ENCODE measurements at regions of chr11 and their contacts with region 1.

Region 1: DNA sequence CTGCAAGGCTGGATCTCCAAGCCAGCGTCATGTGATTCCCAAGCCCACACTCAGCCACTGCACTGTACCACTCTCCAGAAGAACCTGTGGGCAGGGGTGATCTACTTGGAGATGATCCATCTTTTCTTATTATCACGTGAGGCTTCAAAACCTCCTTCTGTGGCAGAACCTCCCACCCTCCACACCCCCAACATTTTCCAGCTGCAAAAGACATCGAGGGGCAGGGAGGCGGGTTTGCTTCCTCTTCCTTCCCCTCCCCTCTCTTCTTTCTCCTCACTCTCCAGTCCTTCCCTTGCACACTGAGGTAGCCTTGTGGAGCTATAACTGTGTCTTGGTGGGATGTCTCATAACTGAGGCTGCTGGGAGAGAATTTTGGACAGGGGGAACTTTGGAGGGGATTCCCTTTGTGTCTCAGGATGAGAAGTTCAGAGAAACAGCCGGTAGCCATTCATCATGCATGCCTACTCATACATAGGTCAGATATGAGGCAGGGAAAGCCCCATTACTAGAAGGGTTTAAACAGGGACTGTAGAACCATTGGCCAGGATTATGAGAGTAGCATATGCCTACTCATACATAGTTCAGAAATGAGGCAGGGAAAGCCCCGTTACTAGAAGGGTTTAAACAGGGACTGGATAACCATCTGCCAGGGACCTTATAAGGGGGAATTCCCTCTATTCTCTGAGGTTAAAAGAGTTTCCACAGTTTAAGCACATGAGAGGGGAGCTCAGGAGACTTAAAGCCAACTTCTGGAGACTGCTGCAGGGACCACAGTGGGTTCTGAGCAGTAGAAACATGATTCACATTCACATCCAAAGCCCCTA is 420.7 kb upstream of the CADM1 start:
- DNase-seq: peak; percentile 56
- H3K4me3 Mint-ChIP-seq: no peak overlapping the region
- H3K27ac Mint-ChIP-seq: no peak overlapping the region
- H3K4me1 Mint-ChIP-seq: peaks cover 16% of the 10 kb centered on the region
- H3K27me3 Mint-ChIP-seq: peaks cover 15% of the 10 kb centered on the region

Region 2: GRCh38 chr11:115222218-115222862 is 702.6 kb before region 1 on chr11:
- CTCF ChIA-PET with region 1: no interaction called
- POLR2A ChIA-PET with region 1: no interaction called
- intact Hi-C with region 1: loop called (anchors 1 kb)
- DNase-seq: peak; percentile 63
- H3K4me3 Mint-ChIP-seq: no peak overlapping the region
- H3K27ac Mint-ChIP-seq: peak overlapping the region; percentile 23
- H3K4me1 Mint-ChIP-seq: peaks cover 35% of the 10 kb centered on the region
- H3K27me3 Mint-ChIP-seq: peaks cover 22% of the 10 kb centered on the region

Region 3: GRCh38 chr11:115585361-115586024 is 339.5 kb before region 1 on chr11:
- CTCF ChIA-PET with region 1: no interaction called
- POLR2A ChIA-PET with region 1: interaction called, 3 read pairs
- intact Hi-C with region 1: loop called (anchors 2 kb)
- DNase-seq: peak; percentile 41
- H3K4me3 Mint-ChIP-seq: no peak overlapping the region
- H3K27ac Mint-ChIP-seq: no peak overlapping the region
- H3K4me1 Mint-ChIP-seq: no peaks in the 10 kb centered on the region
- H3K27me3 Mint-ChIP-seq: peaks cover 1% of the 10 kb centered on the region